Activated CD4-positive, alpha-beta T cell treated with anti-CD3 and anti-CD28 coated beads for 36 hours (primary cell): ENCODE measurements at regions of chr1 and their contacts with region 1.

Region 1: DNA sequence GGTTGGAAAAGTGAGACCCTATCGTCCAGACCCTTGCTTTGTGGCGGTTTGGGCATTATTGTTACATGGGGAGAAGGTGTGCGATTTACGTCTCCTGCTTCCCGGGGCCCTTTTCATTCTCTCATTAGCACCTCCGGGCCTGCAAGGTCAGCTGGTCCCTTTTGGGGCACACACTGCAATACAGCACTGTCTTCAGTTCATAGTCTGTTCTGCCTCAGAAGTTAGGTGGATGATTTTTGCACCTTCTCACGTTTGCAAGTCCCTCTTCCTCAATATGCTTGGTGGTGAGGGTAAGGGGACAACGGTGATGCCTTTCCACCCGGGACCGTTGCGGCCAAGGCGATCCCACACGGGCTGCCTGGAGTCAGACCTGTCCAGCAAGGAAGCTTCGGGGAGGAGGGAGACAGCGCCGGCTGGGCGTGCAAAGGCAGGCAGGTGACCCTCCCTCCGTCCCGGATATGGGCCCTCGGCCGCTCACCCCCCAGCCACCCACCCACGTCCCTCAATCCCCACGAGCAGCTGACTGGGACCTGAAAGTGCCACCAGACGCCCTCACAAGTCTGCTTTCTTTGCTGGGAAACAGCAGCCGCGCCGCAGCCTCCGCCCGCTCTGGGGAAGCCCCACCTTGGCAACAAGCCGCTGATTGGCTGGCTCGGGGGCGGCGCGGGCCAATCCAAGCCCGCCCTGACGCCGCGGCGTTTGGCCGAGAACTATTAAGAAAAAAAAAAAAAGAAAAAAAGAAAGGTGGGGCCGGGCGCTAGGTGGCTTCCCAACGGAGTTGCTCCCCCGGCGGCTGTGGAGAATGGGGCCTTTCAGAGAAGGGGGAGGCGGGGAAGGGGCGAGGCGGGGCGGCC is 21.7 kb downstream of the BTG2 start:
- DNase-seq: peak; percentile 97
- ATAC-seq: peak; percentile 84
- H3K4me3 Mint-ChIP-seq: peak overlapping the region; percentile 72
- H3K27ac Mint-ChIP-seq: peak overlapping the region; percentile 96
- H3K4me1 Mint-ChIP-seq: peaks cover 66% of the 10 kb centered on the region
- H3K27me3 Mint-ChIP-seq: no peaks in the 10 kb centered on the region

Region 2: DNA sequence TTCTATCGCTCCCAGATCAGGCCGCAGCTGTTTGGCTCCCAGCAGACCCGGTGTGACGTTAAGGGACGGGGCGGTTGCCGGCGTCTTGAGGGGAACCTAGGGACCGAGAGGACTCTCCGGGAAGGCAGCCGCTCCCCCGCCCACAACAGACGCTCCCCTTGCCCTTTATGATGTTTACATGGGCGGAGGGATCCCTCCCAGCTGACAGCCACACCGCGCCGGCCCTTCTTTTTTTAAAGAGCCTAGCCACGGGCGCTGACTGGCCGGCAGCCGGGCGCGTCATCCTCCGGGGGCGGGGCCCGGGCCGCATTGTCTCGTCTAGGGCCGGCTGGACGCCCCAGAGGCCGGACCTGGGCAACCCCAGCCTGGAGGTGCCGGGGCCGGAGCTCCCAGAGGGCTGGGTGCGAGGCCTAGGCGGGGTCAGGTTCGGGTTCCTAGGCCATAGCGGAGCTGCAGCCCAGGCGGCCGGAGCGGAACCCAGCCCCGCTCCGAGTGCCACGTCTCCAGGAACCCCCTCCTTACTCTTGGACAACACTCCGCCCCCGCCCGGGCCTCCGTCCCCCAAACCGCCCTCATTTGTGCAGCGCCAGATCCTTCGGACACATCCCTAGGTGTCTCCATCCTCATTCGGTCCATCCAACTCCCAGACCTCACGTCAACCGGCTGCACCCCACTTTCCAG is 516.3 kb before region 1 on chr1 and contains the start of gene PCAT6:
- CTCF ChIA-PET with region 1: no interaction called
- POLR2A ChIA-PET with region 1: no interaction called
- intact Hi-C with region 1: loop called in 1 of 2 experiments (anchors 5 kb)
- DNase-seq: peak; percentile 93
- ATAC-seq: peak; percentile 66
- H3K4me3 Mint-ChIP-seq: peak within 1 kb of the TSS; percentile 75
- H3K27ac Mint-ChIP-seq: peak within 1 kb of the TSS; percentile 68
- H3K4me1 Mint-ChIP-seq: peaks cover 32% of the 10 kb centered on the region
- H3K27me3 Mint-ChIP-seq: peaks cover 8% of the 10 kb centered on the region
- total RNA-seq, gene PCAT6: 0.59 to 2.2 TPM

Region 3: DNA sequence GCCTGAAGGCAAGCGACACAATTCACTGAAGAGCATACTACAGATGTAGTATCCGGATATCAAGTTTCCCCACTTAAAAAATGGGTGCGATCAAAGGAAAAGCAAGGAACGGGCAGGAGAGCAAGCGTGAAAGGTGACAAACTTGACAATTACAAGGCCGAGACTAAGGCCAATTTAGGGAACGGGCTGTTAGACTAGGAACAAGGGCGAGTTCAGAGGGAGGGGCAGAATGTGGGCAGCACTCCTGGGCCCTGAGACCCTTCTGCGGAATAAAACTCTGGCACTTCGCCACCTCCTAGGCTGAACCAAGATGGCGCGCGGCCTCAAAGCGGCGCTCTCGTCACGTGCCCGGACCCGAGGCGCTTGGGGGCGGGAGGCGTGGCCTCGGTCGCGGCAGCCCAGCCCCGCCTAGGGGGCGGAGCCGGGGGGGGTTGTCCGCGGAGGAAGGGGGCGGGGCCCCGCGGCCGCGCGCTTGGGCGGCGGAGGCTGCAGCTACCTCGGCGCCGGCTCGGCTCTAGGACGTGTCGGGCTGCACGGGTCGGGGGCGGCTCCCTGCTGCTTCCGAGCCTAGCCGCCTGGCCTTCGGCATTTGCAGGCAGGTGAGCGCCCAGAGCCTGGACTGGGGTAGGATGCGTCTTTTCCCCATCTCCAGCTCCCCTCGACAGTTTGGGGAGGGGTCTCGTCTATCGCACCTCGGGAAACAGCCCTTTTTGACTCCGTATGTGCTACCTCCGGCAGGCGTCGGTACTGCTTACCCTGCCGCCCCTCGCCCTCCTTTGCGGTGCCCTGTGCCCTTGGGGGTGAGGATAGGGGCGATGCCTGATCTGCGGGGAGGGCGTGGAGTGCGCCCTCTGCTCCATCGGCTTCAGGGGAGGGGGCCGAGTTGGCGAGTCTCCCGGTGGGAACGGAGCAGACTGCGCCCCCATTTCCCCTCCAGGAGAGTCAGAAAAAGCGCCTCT is 300.7 kb before region 1 on chr1 and contains the start of gene PPFIA4:
- CTCF ChIA-PET with region 1: interaction called, 3 read pairs
- POLR2A ChIA-PET with region 1: no interaction called
- intact Hi-C with region 1: loop called in 1 of 2 experiments (anchors 5 kb)
- DNase-seq: peak; percentile 95
- ATAC-seq: peak; percentile 95
- H3K4me3 Mint-ChIP-seq: peak within 1 kb of the TSS; percentile 82
- H3K27ac Mint-ChIP-seq: peak within 1 kb of the TSS; percentile 84
- H3K4me1 Mint-ChIP-seq: peaks cover 19% of the 10 kb centered on the region
- H3K27me3 Mint-ChIP-seq: peaks cover 4% of the 10 kb centered on the region
- total RNA-seq, gene PPFIA4: 51.2 to 56.4 TPM

Region 4: DNA sequence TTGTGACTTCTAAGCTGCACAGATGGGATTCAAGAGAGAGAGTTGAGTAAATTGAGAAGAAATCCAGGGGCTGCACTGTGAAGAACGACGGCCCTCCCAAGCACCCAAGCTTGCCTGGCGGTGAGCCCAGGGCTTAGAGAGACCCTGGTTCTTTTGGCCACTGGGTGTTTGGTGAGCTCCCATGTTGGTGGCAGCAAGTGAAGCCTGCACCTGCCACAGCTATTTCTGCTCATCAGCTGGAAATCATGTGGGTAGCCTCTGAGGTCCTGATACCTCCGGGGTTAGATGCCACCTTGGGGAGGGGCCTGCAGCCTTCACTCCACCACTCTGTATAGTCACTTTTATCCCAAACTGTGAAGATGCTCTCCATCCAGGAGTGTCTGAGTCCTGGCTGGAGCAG is 27.9 kb before region 1 on chr1:
- CTCF ChIA-PET with region 1: interaction called, 10 read pairs
- POLR2A ChIA-PET with region 1: interaction called, 3 read pairs
- intact Hi-C with region 1: no loop called
- DNase-seq: no peak
- ATAC-seq: peak; percentile 19
- H3K4me3 Mint-ChIP-seq: no peak overlapping the region
- H3K27ac Mint-ChIP-seq: no peak overlapping the region
- H3K4me1 Mint-ChIP-seq: peaks cover 56% of the 10 kb centered on the region
- H3K27me3 Mint-ChIP-seq: no peaks in the 10 kb centered on the region

Region 5: GRCh38 chr1:203361945-203362719 is 35.1 kb after region 1 on chr1:
- CTCF ChIA-PET with region 1: no interaction called
- POLR2A ChIA-PET with region 1: no interaction called
- intact Hi-C with region 1: no loop called
- DNase-seq: no peak
- ATAC-seq: no peak
- H3K4me3 Mint-ChIP-seq: no peak overlapping the region
- H3K27ac Mint-ChIP-seq: no peak overlapping the region
- H3K4me1 Mint-ChIP-seq: no peaks in the 10 kb centered on the region
- H3K27me3 Mint-ChIP-seq: peaks cover 10% of the 10 kb centered on the region

Region 6: GRCh38 chr1:203649999-203650855 is 323.2 kb after region 1 on chr1:
- CTCF ChIA-PET with region 1: no interaction called
- POLR2A ChIA-PET with region 1: no interaction called
- intact Hi-C with region 1: loop called in 1 of 2 experiments (anchors 2 kb)
- DNase-seq: peak; percentile 81
- ATAC-seq: peak; percentile 43
- H3K4me3 Mint-ChIP-seq: peak overlapping the region; percentile 59
- H3K27ac Mint-ChIP-seq: peak overlapping the region; percentile 89
- H3K4me1 Mint-ChIP-seq: peaks cover 74% of the 10 kb centered on the region
- H3K27me3 Mint-ChIP-seq: no peaks in the 10 kb centered on the region

Region 7: GRCh38 chr1:204411451-204412204 is 1084.6 kb after region 1 on chr1 and contains the start of gene PPP1R15B:
- CTCF ChIA-PET with region 1: no interaction called
- POLR2A ChIA-PET with region 1: no interaction called
- intact Hi-C with region 1: loop called in 1 of 2 experiments (anchors 5 kb)
- DNase-seq: peak; percentile 98
- ATAC-seq: peak; percentile 92
- H3K4me3 Mint-ChIP-seq: peak within 1 kb of the TSS; percentile 98
- H3K27ac Mint-ChIP-seq: peak within 1 kb of the TSS; percentile 100
- H3K4me1 Mint-ChIP-seq: peaks cover 10% of the 10 kb centered on the region
- H3K27me3 Mint-ChIP-seq: no peaks in the 10 kb centered on the region
- total RNA-seq, gene PPP1R15B: 55.9 to 57.6 TPM